Activated CD4-positive, alpha-beta memory T cell treated with anti-CD3 and anti-CD28 coated beads for 36 hours (primary cell): ENCODE measurements at regions of chr1 and their contacts with region 1.

Region 1: GRCh38 chr1:42766741-42767509 is at the starts of genes C1orf50 and P3H1:
- DNase-seq: peak; percentile 100
- H3K4me3 Mint-ChIP-seq: no peak within 1 kb of the TSS
- H3K27ac Mint-ChIP-seq: peak within 1 kb of the TSS; percentile 78
- H3K4me1 Mint-ChIP-seq: peaks cover 31% of the 10 kb centered on the region
- H3K27me3 Mint-ChIP-seq: no peaks in the 10 kb centered on the region
- total RNA-seq, gene C1orf50: 5.6 to 7.6 TPM
- total RNA-seq, gene P3H1: 32.0 to 34.8 TPM

Region 2: DNA sequence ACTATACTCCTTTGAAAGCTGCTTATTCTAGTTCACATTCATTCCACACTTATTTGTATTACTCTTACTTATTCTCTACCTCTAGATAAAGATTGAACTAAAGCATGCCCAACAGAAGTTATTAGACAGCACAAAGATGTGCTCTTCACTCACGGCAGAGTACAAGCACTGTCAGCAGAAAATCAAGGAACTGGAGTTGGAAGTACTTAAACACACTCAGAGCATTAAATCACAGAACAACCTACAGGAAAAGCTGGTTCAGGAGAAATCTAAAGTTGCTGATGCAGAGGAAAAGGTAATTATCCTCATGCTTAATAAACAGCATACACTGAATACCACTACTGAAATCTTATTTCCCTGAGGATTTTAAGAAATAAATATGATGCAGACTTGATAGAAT is 190.0 kb before region 1 on chr1:
- CTCF ChIA-PET with region 1: interaction called, 15 read pairs
- POLR2A ChIA-PET with region 1: no interaction called
- intact Hi-C with region 1: no loop called
- DNase-seq: no peak
- H3K4me3 Mint-ChIP-seq: no peak overlapping the region
- H3K27ac Mint-ChIP-seq: no peak overlapping the region
- H3K4me1 Mint-ChIP-seq: no peaks in the 10 kb centered on the region
- H3K27me3 Mint-ChIP-seq: no peaks in the 10 kb centered on the region

Region 3: GRCh38 chr1:42681741-42682483 is 85.0 kb before region 1 on chr1 and contains the start of gene YBX1:
- CTCF ChIA-PET with region 1: interaction called, 3 read pairs
- POLR2A ChIA-PET with region 1: interaction called, 32 read pairs
- intact Hi-C with region 1: loop called (anchors 2 kb)
- DNase-seq: peak; percentile 97
- H3K4me3 Mint-ChIP-seq: peak within 1 kb of the TSS; percentile 93
- H3K27ac Mint-ChIP-seq: peak within 1 kb of the TSS; percentile 97
- H3K4me1 Mint-ChIP-seq: peaks cover 45% of the 10 kb centered on the region
- H3K27me3 Mint-ChIP-seq: no peaks in the 10 kb centered on the region
- total RNA-seq, gene YBX1: 1,101 to 1,134 TPM

Region 4: GRCh38 chr1:42816585-42817434 is 49.9 kb after region 1 on chr1 and contains the starts of genes ERMAP and SVBP:
- CTCF ChIA-PET with region 1: interaction called, 4 read pairs
- POLR2A ChIA-PET with region 1: interaction called, 11 read pairs
- intact Hi-C with region 1: loop called (anchors 1 kb)
- DNase-seq: peak; percentile 96
- H3K4me3 Mint-ChIP-seq: peak within 1 kb of the TSS; percentile 76
- H3K27ac Mint-ChIP-seq: peak within 1 kb of the TSS; percentile 75
- H3K4me1 Mint-ChIP-seq: peaks cover 17% of the 10 kb centered on the region
- H3K27me3 Mint-ChIP-seq: no peaks in the 10 kb centered on the region
- total RNA-seq, gene ERMAP: 3.4 to 4.5 TPM
- total RNA-seq, gene SVBP: 16.8 to 18.8 TPM

Region 5: GRCh38 chr1:42913426-42914091 is 146.6 kb after region 1 on chr1:
- CTCF ChIA-PET with region 1: interaction called, 11 read pairs
- POLR2A ChIA-PET with region 1: no interaction called
- intact Hi-C with region 1: no loop called
- DNase-seq: peak; percentile 52
- H3K4me3 Mint-ChIP-seq: no peak overlapping the region
- H3K27ac Mint-ChIP-seq: no peak overlapping the region
- H3K4me1 Mint-ChIP-seq: peaks cover 6% of the 10 kb centered on the region
- H3K27me3 Mint-ChIP-seq: peaks cover 6% of the 10 kb centered on the region

Region 6: GRCh38 chr1:42958488-42959319 is 191.8 kb after region 1 on chr1 and contains the start of gene SLC2A1:
- CTCF ChIA-PET with region 1: no interaction called
- POLR2A ChIA-PET with region 1: interaction called, 5 read pairs
- intact Hi-C with region 1: loop called (anchors 2 kb)
- DNase-seq: peak; percentile 98
- H3K4me3 Mint-ChIP-seq: peak within 1 kb of the TSS; percentile 94
- H3K27ac Mint-ChIP-seq: peak within 1 kb of the TSS; percentile 98
- H3K4me1 Mint-ChIP-seq: peaks cover 49% of the 10 kb centered on the region
- H3K27me3 Mint-ChIP-seq: peaks cover 2% of the 10 kb centered on the region
- total RNA-seq, gene SLC2A1: 67.6 to 73.6 TPM

Region 7: GRCh38 chr1:43171876-43172526 is 405.1 kb after region 1 on chr1 and contains the starts of genes CFAP57 and EBNA1BP2:
- CTCF ChIA-PET with region 1: interaction called, 4 read pairs
- POLR2A ChIA-PET with region 1: interaction called, 4 read pairs
- intact Hi-C with region 1: loop called (anchors 2 kb)
- DNase-seq: peak; percentile 96
- H3K4me3 Mint-ChIP-seq: peak within 1 kb of the TSS; percentile 98
- H3K27ac Mint-ChIP-seq: peak within 1 kb of the TSS; percentile 76
- H3K4me1 Mint-ChIP-seq: peaks cover 27% of the 10 kb centered on the region
- H3K27me3 Mint-ChIP-seq: peaks cover 16% of the 10 kb centered on the region
- total RNA-seq, gene CFAP57: 0.43 TPM in 1 of 2 experiments, not detected in the other
- total RNA-seq, gene EBNA1BP2: 97.5 to 104 TPM